ENCODE measurements at regions of chr4 and their contacts with region 1.

Region 1: DNA sequence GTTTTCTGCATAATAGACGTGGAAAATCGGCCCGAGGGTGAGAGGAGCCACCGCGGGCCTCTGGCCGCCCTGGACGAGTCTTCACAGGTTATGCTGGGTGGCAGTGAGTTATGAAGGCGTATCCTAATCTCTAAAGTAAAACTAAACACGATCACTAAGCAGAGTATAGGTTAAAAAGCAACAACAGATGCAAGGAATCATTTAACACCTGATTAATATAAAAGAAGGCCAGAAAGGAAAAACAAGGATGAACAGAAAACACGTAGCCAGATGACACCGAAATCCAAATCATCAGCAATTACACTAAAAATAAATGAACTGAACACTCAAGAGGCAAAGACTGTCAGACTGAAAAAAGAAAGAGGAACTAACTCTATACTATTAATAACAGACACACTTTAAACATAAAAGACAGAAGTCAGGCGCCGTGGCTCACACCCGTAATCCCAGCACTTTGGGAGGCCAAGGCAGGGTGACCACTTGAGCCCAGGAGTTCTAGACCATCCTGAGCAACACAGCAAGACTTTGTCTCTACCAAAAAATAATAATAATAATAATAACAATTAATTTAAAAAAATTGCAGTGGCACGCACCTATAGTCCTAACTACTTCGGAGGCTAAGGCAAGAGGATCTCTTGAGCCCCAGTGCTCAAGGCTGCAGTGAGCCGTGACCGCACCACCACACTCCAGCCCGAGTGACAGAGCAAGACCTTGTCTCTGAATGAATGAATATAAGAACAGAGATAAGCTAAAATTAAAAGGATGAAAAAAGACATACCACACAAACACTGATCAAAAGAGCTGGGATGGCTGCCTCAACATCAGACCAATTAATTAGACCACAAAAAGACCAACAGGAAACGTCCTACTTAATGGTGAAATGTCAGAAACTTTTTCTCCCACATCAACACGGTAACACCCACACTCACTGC is 30.0 kb downstream of the CTBP1 start:
- DNase-seq: peak; percentile 86
- H3K4me3 ChIP-seq: peak overlapping the region; percentile 62
- H3K27ac ChIP-seq: peak overlapping the region; percentile 99
- H3K4me1 ChIP-seq: peaks cover 77% of the 10 kb centered on the region
- CTCF ChIP-seq: no peak

Region 2: GRCh38 chr4:1154523-1155182 is 64.2 kb before region 1 on chr4:
- CTCF ChIA-PET with region 1: no interaction called
- POLR2A ChIA-PET with region 1: no interaction called
- intact Hi-C with region 1: no loop called
- DNase-seq: peak; percentile 51
- H3K4me3 ChIP-seq: peak overlapping the region; percentile 31
- H3K27ac ChIP-seq: peak overlapping the region; percentile 8
- H3K4me1 ChIP-seq: peaks cover 18% of the 10 kb centered on the region
- CTCF ChIP-seq: no peak

Region 3: GRCh38 chr4:1200425-1201035 is 18.4 kb before region 1 on chr4:
- CTCF ChIA-PET with region 1: interaction called, 4 read pairs
- POLR2A ChIA-PET with region 1: interaction called, 5 read pairs
- intact Hi-C with region 1: loop called (anchors 1 kb)
- DNase-seq: no peak
- H3K4me3 ChIP-seq: peak overlapping the region; percentile 7
- H3K27ac ChIP-seq: peak overlapping the region; percentile 36
- H3K4me1 ChIP-seq: peaks cover 25% of the 10 kb centered on the region
- CTCF ChIP-seq: no peak

Region 4: DNA sequence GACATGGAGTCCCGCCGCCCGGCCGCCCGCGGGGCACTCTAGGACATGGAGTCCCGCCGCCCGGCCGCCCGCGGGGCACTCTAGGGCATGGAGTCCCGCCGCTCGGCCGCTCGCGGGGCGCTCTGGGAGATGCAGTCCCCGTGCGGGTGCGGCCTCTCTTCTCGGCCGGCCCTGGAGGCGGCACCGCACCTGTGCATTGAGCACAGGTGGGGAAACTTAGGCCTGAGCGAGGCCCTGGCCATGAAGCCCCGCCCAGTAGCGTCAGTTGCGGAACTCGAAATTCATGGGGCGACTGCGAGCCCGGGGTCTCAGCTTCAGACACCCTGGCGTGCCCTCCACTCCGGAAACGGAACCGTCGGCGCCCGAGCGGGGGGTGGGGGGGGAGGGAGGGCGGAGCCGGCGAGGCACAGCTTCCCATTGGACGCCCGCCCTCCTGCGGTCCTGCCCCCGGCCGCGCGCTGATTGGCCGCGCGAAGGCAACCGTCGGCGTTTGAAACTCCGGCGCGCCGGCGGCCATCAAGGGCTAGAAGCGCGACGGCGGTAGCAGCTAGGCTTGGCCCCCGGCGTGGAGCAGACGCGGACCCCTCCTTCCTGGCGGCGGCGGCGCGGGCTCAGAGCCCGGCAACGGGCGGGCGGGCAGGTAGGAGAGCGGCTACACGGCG is 502.2 kb after region 1 on chr4 and contains the starts of genes TACC3 and TMEM129:
- CTCF ChIA-PET with region 1: no interaction called
- POLR2A ChIA-PET with region 1: no interaction called
- intact Hi-C with region 1: loop called (anchors 2 kb)
- DNase-seq: peak; percentile 98
- H3K4me3 ChIP-seq: peak within 1 kb of the TSS; percentile 94
- H3K27ac ChIP-seq: peak within 1 kb of the TSS; percentile 90
- H3K4me1 ChIP-seq: peaks cover 75% of the 10 kb centered on the region
- CTCF ChIP-seq: no peak
- total RNA-seq, gene TACC3: 100 and 130 TPM in 2 replicates
- total RNA-seq, gene TMEM129: 35.1 and 44.0 TPM in 2 replicates